Caco-2 (cell line): ENCODE measurements at regions of chr5 and their contacts with region 1.

Region 1: DNA sequence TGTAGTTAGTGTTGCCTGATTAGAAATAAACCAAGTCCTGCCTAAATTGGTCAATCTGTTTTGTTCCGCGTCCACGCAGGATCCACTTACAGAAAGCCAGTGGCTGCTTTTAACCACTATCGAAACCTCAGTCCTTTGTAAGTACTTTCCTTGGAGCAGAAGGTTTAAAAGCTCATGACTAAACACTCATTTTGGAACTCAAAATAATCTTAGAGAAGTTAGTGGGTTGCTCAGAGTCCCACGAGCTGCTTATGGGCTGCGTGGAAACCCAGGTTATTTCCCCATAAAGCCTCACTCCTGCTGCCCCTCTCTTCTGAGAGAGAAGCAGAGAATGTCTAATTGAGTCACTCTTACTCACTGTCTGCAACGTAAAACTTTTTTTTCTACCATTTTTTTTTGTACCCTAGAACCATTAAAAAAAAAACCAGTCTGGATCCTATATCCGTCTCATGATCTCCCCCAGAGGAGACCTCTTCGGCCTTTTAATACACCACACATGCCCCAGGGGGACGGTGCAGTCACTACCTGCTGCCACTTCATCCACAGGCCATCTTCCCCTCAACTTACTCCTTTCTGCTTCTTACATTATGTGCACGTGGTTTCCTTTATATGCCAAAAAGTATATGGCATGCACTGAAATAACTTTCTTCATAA is 7.6 kb downstream of the BASP1 start:
- DNase-seq: no peak
- H3K4me3 ChIP-seq: no peak overlapping the region
- H3K4me3 Mint-ChIP-seq: peak overlapping the region; percentile 57
- H3K27ac Mint-ChIP-seq: peak overlapping the region; percentile 76
- H3K4me1 ChIP-seq: peaks cover 43% of the 10 kb centered on the region
- H3K4me1 Mint-ChIP-seq: peaks cover 50% of the 10 kb centered on the region
- H3K27me3 ChIP-seq: no peaks in the 10 kb centered on the region
- H3K27me3 Mint-ChIP-seq: no peaks in the 10 kb centered on the region
- CTCF ChIP-seq: no peak

Region 2: DNA sequence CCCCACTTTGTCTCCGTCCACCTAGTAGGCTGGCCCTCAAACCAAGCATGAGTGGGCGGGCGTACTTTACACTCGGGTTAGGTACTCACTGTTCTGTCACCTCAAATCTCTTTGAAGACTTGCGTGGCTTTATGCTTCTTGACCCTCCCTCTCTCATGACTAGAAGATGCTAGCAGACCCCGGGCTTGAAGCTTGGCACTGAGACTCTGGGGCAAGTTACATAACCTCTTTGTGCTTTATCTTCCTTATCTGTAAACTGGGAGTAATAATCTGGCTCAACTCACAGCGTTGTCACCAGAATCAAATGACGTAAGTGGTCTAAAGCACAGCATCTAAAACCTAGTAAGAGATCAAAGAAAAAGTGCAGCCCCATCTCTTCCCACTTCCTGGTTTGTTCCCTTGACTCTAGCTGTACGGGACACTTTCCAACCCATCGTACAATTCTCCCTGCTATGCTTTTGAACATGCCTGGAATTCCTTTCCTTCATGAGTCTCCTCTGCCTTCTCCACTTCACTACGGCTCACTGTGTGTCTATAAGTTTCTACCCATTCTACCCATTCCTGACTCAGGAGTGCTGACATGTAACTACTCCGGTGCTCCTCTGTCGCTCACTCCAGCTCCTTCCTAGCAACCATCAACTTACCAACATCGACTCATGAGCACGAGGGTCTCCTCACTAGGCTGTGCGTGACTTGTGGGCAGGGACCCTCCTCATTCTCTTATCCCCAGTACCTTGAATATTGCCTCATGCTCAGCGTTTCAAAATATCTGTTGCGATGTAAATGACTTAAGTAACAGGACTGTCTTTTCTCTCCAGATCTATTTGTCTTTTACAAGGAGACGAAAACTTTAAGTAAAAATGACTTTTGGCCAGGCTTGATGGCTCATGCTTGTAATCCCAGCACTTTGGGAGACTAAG is 65.3 kb after region 1 on chr5:
- CTCF ChIA-PET with region 1: no interaction called
- POLR2A ChIA-PET with region 1: no interaction called
- intact Hi-C with region 1: loop called (anchors 5 kb)
- DNase-seq: peak; percentile 39 to 51
- H3K4me3 ChIP-seq: no peak overlapping the region
- H3K4me3 Mint-ChIP-seq: no peak overlapping the region
- H3K27ac Mint-ChIP-seq: peak overlapping the region; percentile 77
- H3K4me1 ChIP-seq: peaks cover 16% of the 10 kb centered on the region
- H3K4me1 Mint-ChIP-seq: peaks cover 31% of the 10 kb centered on the region
- H3K27me3 ChIP-seq: no peaks in the 10 kb centered on the region
- H3K27me3 Mint-ChIP-seq: no peaks in the 10 kb centered on the region
- CTCF ChIP-seq: no peak